Activated naive CD4-positive, alpha-beta T cell treated with anti-CD3 and anti-CD28 coated beads for 36 hours (primary cell): ENCODE measurements at regions of chr4 and their contacts with region 1.

Region 1: GRCh38 chr4:78864405-78865024 is 74.7 kb downstream of the PAQR3 start:
- DNase-seq: peak; percentile 15
- H3K4me3 Mint-ChIP-seq: no peak overlapping the region
- H3K27ac Mint-ChIP-seq: no peak overlapping the region
- H3K4me1 Mint-ChIP-seq: peaks cover 6% of the 10 kb centered on the region
- H3K27me3 Mint-ChIP-seq: no peaks in the 10 kb centered on the region

Region 2: DNA sequence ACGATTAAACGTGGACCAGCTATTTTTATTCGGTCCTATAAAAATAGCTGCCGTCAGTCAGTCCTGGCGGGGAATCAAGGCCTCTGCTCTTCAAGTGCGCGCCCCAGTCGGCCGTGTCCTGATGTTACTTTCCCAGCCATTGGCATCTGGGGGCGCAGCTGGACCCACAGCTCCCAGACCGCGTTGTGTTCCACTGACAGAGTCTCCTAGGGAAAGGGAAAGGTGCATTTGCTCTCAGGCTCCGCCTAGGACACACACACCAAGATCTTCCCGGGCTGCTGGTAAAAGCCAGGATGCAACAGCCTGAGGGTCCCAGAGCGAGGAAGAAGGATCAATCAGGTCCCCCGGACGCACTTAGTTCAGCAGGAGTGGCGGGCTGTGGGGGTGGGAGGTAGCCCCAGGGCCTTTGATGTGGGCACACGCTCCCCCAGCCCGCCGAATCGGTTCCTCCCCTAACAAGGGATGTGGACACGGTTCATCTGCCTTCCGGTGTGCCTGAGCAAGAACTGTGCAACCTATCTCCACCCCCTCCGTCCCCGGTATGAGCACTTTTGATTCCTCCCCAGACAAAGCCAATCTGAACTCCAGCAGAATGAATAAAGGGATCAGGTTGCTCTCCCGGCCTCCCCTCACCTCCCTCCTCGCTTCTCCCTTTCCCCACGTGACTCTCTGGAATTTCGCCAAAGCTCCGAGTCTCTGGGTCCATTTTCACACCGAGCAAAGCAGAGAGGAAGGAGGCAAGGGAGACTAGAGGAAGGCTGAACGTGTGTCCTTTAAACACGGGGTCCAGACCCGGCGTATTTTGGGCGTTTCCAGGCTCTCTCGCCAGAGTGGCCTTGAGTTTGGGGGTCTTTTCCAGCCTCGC is 808.0 kb before region 1 on chr4:
- CTCF ChIA-PET with region 1: no interaction called
- intact Hi-C with region 1: loop called (anchors 5 kb)
- DNase-seq: peak; percentile 50
- H3K4me3 Mint-ChIP-seq: peak overlapping the region; percentile 65
- H3K27ac Mint-ChIP-seq: no peak overlapping the region
- H3K4me1 Mint-ChIP-seq: peaks cover 21% of the 10 kb centered on the region
- H3K27me3 Mint-ChIP-seq: peaks cover 41% of the 10 kb centered on the region

Region 3: DNA sequence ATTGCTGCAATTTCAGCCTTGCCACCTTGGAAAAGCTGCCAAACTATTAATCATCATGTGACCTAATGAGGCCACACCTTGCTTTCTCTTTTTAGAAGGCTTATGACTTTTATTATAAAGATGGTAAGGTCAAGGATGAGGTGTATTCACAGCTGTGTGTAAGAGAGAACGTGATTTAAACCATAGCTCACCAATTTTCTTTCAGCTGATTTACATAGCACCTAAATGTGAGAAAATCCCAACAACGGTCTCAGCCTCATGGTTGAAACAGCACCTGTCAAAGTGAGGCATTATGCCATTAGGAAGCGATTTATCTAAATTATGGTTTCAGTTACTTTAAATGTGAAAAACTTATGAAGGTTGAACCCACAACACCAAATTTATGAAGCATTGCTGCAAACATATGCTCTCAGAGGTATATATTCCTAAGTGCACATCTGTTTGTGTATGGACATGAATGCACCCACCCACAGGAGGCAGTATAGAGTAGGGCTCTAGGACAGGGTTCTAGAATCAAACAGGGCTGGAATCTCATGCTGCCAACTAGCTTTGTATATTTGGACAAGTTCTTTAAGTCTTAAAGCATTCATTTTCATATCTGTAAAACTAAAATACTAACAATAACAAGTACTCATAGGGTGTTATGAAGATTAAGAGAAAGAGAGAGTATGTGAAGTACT is 272.3 kb before region 1 on chr4:
- CTCF ChIA-PET with region 1: interaction called, 6 read pairs
- intact Hi-C with region 1: loop called (anchors 1 kb)
- DNase-seq: peak; percentile 27
- H3K4me3 Mint-ChIP-seq: no peak overlapping the region
- H3K27ac Mint-ChIP-seq: no peak overlapping the region
- H3K4me1 Mint-ChIP-seq: no peaks in the 10 kb centered on the region
- H3K27me3 Mint-ChIP-seq: no peaks in the 10 kb centered on the region

Region 4: GRCh38 chr4:78644744-78645330 is 219.7 kb before region 1 on chr4:
- CTCF ChIA-PET with region 1: interaction called, 8 read pairs
- intact Hi-C with region 1: loop called (anchors 1 kb)
- DNase-seq: peak; percentile 78
- H3K4me3 Mint-ChIP-seq: no peak overlapping the region
- H3K27ac Mint-ChIP-seq: no peak overlapping the region
- H3K4me1 Mint-ChIP-seq: peaks cover 7% of the 10 kb centered on the region
- H3K27me3 Mint-ChIP-seq: no peaks in the 10 kb centered on the region

Region 5: DNA sequence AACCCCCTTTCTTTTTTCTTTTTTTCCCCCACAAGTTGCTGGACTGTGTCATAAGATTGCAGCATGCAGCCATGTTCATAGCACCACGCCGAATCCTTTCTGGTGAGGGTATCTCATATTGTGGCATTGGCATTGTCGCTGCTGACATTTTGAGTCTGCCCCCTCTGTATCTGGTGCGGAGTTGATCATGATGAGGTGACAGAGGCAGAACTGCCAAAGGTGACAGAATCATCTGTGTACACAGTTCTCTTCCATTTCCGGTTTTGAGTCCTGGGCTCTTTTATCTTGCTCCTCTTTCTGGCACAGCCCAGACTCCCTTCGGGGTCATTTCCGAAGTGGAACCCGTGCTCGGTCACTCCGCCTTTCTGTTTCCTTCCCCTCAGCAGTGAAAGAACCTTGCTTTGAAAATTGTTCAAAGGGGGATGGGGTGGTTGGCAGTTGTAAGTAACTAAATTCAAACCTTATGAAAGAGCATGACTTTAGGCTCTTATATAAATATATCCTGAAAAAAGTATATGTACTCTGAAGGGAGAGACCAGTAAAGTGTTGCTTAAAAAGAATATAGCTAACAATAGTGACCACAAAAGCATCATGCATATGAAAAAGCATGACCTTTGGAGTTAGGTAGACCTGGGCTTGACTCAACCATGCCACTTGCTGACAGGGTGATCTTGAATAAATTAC is 143.4 kb before region 1 on chr4:
- CTCF ChIA-PET with region 1: no interaction called
- intact Hi-C with region 1: loop called (anchors 5 kb)
- DNase-seq: peak; percentile 67
- H3K4me3 Mint-ChIP-seq: no peak overlapping the region
- H3K27ac Mint-ChIP-seq: no peak overlapping the region
- H3K4me1 Mint-ChIP-seq: peaks cover 19% of the 10 kb centered on the region
- H3K27me3 Mint-ChIP-seq: no peaks in the 10 kb centered on the region